ENCODE measurements at regions of chr2 and their contacts with region 1.

Region 1: GRCh38 chr2:161250864-161251436 is 57.3 kb upstream of the PSMD14 start:
- DNase-seq: peak; percentile 32
- ATAC-seq: peak; percentile 72
- H3K4me3 Mint-ChIP-seq: no peak overlapping the region
- H3K27ac Mint-ChIP-seq: no peak overlapping the region
- H3K4me1 Mint-ChIP-seq: peaks cover 13% of the 10 kb centered on the region
- H3K27me3 Mint-ChIP-seq: peaks cover 19% of the 10 kb centered on the region

Region 2: DNA sequence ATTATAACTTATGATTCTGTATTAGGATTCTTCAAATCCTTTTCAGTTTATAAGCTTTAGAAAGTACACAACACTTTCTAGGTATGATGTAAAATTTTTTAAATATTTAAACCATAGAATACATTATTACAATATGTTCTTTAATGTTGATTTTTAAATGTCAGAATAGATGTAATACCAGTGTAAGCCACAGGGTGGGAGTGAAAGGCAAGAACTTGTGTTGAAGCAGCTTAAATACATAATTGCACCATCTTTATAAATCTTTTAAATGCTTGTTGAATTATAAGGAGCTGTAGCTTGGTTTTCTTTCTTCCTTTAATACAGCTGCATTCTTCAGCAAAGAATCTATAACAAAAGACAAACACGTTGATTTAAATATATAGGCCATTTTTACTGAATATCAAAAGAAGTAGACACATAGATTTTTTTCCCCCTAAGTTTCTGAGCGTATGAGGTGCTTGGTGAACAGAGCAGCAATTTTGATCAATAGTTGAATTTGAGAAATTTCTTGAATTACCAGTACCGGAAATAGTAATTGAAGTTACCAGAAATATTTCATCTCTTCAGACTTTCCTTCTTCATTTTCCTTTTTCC is 27.7 kb before region 1 on chr2:
- CTCF ChIA-PET with region 1: interaction called, 10 read pairs
- POLR2A ChIA-PET with region 1: no interaction called
- DNase-seq: peak; percentile 39
- ATAC-seq: no peak
- H3K4me3 Mint-ChIP-seq: no peak overlapping the region
- H3K27ac Mint-ChIP-seq: no peak overlapping the region
- H3K4me1 Mint-ChIP-seq: peaks cover 2% of the 10 kb centered on the region
- H3K27me3 Mint-ChIP-seq: no peaks in the 10 kb centered on the region

Region 3: GRCh38 chr2:161265874-161266273 is 14.9 kb after region 1 on chr2:
- CTCF ChIA-PET with region 1: interaction called, 10 read pairs
- POLR2A ChIA-PET with region 1: no interaction called
- DNase-seq: no peak
- ATAC-seq: no peak
- H3K4me3 Mint-ChIP-seq: no peak overlapping the region
- H3K27ac Mint-ChIP-seq: no peak overlapping the region
- H3K4me1 Mint-ChIP-seq: no peaks in the 10 kb centered on the region
- H3K27me3 Mint-ChIP-seq: peaks cover 19% of the 10 kb centered on the region

Region 4: DNA sequence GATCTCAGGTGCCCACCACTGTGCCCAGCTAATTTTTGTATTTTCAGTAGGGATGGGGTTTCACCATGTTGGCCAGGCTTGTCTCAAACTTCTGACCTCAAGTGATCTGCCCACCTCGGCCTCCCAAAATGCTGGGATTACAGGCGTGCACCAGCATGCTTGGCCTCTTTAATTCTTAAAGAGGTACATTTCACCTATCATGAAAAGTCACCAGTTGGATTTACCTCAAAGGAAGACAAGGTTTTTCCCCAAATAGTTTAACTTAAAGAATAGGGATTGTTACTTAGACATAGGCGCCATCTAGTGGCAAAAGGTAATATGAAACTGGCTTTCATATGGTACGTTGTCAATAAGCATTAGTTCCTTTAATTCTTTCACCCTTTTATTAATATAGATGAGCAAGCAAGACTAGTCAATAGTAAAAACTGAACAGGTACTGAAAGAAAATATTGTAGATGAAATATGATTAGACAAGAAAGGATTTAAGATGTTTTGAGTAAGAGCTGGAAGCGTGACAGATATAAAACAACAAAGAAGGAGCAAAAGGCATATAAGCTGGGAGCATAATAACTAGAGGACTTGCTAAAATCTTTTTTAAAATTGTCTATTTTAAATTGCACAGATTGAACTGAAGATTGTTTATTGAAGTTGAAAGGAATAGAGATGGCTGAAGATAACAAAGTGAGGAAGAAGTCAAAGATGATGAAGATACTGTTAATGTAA is 22.2 kb after region 1 on chr2:
- CTCF ChIA-PET with region 1: interaction called, 18 read pairs
- POLR2A ChIA-PET with region 1: interaction called, 3 read pairs
- DNase-seq: peak; percentile 55
- ATAC-seq: peak; percentile 65
- H3K4me3 Mint-ChIP-seq: no peak overlapping the region
- H3K27ac Mint-ChIP-seq: no peak overlapping the region
- H3K4me1 Mint-ChIP-seq: peaks cover 3% of the 10 kb centered on the region
- H3K27me3 Mint-ChIP-seq: peaks cover 23% of the 10 kb centered on the region

Measured in activated CD8-positive, alpha-beta T cell treated with anti-CD3 and anti-CD28 coated beads, Interleukin-2, amount 10 ng/mL, durations not matched to agents 7 days and 5 days (primary cell).